ENCODE measurements at regions of chr4 and their contacts with region 1.

Region 1: DNA sequence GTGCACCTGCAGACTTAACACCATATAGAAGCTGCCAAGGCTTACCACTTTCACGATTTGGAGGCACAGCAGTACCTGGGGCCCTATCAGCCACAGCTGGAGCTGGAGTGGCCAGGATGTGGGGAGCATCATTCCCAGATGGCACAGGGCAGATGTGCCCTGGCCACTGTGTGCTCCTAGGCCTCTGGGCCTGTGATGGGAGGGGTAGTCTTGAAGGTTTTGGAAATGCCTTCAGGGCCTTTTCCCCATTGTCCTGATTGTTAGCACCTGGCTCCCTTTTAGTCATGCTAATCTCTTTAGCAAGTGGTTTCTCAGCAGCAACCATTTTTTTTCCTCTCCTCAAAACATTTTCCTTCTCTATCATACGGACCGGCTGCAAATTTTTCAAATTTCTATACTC is 490.2 kb downstream of the RAB28 start:
- DNase-seq: no peak
- ATAC-seq: no peak
- H3K4me3 ChIP-seq: no peak overlapping the region
- H3K27ac ChIP-seq: no peak overlapping the region
- H3K4me1 ChIP-seq: no peaks in the 10 kb centered on the region
- H3K27me3 ChIP-seq: no peaks in the 10 kb centered on the region
- CTCF ChIP-seq: no peak

Region 2: GRCh38 chr4:12615822-12616221 is 378.1 kb before region 1 on chr4:
- CTCF ChIA-PET with region 1: no interaction called
- POLR2A ChIA-PET with region 1: no interaction called
- in situ Hi-C with region 1: no loop called
- intact Hi-C with region 1: loop called (anchors 5 kb)
- DNase-seq: no peak
- ATAC-seq: no peak
- H3K4me3 ChIP-seq: no peak overlapping the region
- H3K27ac ChIP-seq: no peak overlapping the region
- H3K4me1 ChIP-seq: no peaks in the 10 kb centered on the region
- H3K27me3 ChIP-seq: no peaks in the 10 kb centered on the region
- CTCF ChIP-seq: no peak